ENCODE measurements at regions of chr15 and their contacts with region 1.

Region 1: DNA sequence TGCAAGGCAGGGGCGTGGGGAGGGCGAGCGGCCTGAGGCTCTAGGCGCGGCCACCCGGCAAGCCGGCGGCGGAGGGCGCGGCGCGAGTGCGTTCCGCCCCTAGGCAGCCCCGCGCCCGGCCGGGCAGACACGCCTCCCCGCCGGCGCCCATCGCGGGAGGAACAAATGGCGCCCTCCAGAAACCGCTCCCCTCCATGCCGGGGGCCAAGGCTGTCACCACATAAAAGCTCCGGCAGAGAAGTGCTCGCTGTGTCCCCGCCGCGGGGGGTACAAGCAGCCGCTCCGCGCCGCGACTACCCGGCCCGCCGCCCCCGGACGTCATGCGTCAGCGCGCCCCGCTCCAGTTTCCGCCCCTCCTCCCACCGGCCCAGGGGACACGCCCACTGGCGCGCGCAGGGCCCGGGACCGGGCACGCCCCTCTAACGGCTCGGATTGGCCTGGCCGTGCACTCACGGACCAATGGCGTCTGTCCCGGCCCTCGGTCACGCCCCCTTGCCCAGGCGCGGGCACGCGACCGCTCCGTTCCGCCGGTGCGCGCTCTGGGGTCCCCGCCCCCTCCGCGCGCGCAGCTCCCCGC is 391 bp upstream of the KLF13 start:
- DNase-seq: peak; percentile 100
- H3K4me3 Mint-ChIP-seq: peak overlapping the region; percentile 77
- H3K27ac Mint-ChIP-seq: peak overlapping the region; percentile 79
- H3K4me1 Mint-ChIP-seq: peaks cover 65% of the 10 kb centered on the region
- H3K27me3 Mint-ChIP-seq: no peaks in the 10 kb centered on the region

Region 2: DNA sequence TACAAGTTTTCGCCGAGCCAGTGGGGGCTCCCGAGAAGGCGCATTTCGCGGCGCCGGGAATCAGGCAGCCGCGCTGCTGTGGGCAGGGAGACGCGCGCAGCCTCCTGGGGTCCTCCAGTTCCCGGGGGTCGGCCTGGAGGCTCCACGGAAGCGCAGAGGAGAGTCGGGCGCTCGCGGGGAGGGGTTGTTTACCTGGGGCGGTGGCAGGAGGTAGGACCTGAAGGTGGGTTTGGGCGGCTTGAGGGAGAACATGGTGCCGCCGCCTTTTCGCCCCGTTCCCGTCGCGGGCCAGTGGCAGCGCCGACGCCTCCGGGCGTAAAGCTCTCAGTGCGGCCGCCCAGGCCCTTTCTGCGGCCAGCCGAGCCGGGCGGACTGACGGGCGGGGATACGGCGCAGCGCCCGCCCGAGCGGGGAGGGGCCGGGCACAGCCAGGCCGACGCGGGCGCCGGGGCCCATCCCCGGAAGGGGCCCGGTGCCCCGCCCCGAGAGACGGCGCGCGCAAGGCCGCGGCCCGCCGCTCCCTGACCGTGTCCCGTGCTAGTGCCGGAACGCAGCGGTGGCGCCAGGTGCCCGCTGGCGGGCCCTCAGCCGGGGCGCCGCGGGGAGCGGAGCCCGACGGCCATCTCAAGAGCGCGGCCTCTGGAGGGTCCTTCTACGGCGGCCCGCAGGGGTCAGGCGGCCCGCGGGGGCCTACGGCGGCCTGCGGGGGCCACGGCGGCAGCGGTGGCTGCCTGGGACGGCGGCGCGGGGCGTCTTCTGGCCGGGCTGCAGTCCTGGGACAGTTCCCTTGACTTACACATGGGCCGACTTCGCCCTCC is 334.8 kb before region 1 on chr15 and contains the start of gene MTMR10:
- intact Hi-C with region 1: loop called (anchors 5 kb)
- DNase-seq: peak; percentile 75
- H3K4me3 Mint-ChIP-seq: peak within 1 kb of the TSS; percentile 93
- H3K27ac Mint-ChIP-seq: peak within 1 kb of the TSS; percentile 85
- H3K4me1 Mint-ChIP-seq: peaks cover 26% of the 10 kb centered on the region
- H3K27me3 Mint-ChIP-seq: peaks cover 4% of the 10 kb centered on the region
- total RNA-seq, gene MTMR10: 11.8 and 13.4 TPM in 2 replicates

Region 3: GRCh38 chr15:31265871-31266711 is 60.2 kb before region 1 on chr15:
- intact Hi-C with region 1: loop called (anchors 1 kb)
- DNase-seq: peak; percentile 79
- H3K4me3 Mint-ChIP-seq: peak overlapping the region; percentile 52
- H3K27ac Mint-ChIP-seq: peak overlapping the region; percentile 79
- H3K4me1 Mint-ChIP-seq: peaks cover 94% of the 10 kb centered on the region
- H3K27me3 Mint-ChIP-seq: no peaks in the 10 kb centered on the region

Region 4: DNA sequence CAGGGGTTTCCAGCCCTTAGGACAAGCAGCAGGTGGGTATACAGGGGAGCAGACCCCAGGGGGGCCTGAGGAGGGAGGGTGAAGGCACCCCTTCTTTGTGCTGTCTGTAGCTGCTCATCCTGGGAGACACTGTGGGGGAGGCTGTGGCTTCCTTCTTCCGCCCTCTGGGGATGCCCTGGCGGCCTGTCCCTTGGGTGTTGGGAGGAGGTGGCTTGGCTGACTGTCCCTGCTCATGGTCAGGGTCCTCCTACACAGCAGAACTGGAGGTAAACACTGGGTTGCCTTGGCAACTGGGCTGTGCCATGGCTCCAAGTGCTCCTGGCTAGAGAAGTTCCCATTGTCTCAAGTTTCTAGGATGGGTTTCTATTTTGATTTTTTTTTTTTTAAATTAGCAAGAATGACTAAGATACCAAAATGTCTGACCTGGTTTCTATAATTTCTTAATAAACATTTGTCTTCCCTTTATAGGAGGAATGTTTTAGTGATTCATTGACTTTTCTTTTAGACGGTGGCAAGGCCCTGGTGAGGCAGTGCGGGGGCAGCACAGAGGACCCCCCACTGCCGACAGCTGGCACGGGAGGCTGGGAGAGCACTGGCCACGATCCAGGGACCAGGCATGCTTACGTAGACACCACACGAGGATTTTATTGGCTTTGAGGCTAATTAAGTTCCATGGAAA is 12.8 kb after region 1 on chr15:
- intact Hi-C with region 1: loop called (anchors 1 kb)
- DNase-seq: peak; percentile 51
- H3K4me3 Mint-ChIP-seq: peak overlapping the region; percentile 75
- H3K27ac Mint-ChIP-seq: peak overlapping the region; percentile 89
- H3K4me1 Mint-ChIP-seq: peaks cover 97% of the 10 kb centered on the region
- H3K27me3 Mint-ChIP-seq: no peaks in the 10 kb centered on the region

Region 5: DNA sequence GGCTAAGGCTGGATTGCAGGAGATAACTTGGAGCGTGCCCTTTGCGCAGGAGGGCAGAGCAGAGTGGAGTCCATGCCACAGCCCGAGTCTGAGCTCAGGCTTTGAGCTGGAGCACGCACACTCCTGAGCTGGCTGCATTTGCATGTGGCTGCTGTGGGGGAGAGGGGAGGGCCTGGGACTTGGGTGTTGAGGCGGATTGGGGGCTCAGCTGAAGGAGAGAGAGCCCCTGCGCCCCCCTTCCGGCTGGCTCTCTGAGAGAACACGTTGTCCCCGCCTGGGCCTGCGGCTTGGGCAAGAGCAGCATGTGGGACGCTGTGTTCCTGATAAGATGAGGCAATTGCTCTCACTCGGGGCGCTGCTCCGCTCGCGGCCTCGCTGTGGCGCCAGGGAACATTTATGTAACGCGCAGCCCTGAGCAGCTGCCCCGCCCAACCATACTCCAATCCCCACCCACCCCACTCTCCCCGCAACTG is 39.4 kb after region 1 on chr15:
- intact Hi-C with region 1: loop called (anchors 1 kb)
- DNase-seq: peak; percentile 69
- H3K4me3 Mint-ChIP-seq: peak overlapping the region; percentile 77
- H3K27ac Mint-ChIP-seq: peak overlapping the region; percentile 99
- H3K4me1 Mint-ChIP-seq: peaks cover 97% of the 10 kb centered on the region
- H3K27me3 Mint-ChIP-seq: no peaks in the 10 kb centered on the region

Region 6: DNA sequence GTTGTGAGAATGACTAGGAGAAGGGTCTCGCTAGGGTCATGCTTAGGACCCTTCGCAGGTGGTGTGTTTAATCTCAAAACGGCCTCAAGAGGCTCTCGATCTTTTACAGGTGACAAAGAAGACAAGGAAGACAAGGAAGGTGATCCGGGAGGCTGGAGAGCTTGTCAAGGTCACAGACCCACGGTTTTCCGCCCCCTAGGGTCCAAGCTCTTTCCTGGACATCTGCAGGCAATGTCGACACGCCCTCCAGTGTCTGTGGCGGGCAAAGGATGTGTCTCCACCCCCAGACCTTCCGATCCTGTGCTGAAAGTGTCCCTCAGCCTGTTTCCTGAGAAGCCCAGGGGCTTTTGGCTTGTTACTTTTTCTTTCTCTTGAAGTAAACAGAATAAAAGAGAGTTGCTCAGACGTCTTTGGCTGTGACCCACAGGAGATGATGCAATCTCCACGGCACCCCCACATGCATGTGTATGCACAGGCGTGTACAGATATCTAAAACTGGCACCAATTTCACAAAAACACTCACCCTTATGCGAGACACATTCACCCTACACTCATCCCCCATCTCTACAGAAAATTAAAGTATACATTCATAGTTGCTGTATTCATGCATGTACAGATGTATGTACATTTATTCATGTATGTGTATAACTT is 109.1 kb after region 1 on chr15:
- intact Hi-C with region 1: loop called (anchors 1 kb)
- DNase-seq: peak; percentile 86
- H3K4me3 Mint-ChIP-seq: peak overlapping the region; percentile 58
- H3K27ac Mint-ChIP-seq: peak overlapping the region; percentile 93
- H3K4me1 Mint-ChIP-seq: peaks cover 77% of the 10 kb centered on the region
- H3K27me3 Mint-ChIP-seq: no peaks in the 10 kb centered on the region

Region 7: GRCh38 chr15:31488426-31489204 is 162.4 kb after region 1 on chr15:
- intact Hi-C with region 1: loop called (anchors 1 kb)
- DNase-seq: peak; percentile 29
- H3K4me3 Mint-ChIP-seq: peak overlapping the region; percentile 40
- H3K27ac Mint-ChIP-seq: peak overlapping the region; percentile 76
- H3K4me1 Mint-ChIP-seq: peaks cover 75% of the 10 kb centered on the region
- H3K27me3 Mint-ChIP-seq: no peaks in the 10 kb centered on the region

Region 8: GRCh38 chr15:31752065-31752762 is 426.0 kb after region 1 on chr15:
- intact Hi-C with region 1: no loop called
- DNase-seq: no peak
- H3K4me3 Mint-ChIP-seq: no peak overlapping the region
- H3K27ac Mint-ChIP-seq: no peak overlapping the region
- H3K4me1 Mint-ChIP-seq: no peaks in the 10 kb centered on the region
- H3K27me3 Mint-ChIP-seq: peaks cover 5% of the 10 kb centered on the region